Naive thymus-derived CD4-positive, alpha-beta T cell (primary cell): ENCODE measurements at regions of chr6 and their contacts with region 1.

Region 1: GRCh38 chr6:28981833-28982475 is 23.2 kb downstream of the ZNF311 start:
- DNase-seq: peak; percentile 48 to 89 (median 86)
- ATAC-seq: peak; percentile 81
- H3K4me3 ChIP-seq: peak overlapping the region; percentile 99
- H3K4me3 Mint-ChIP-seq: peak overlapping the region; percentile 85 to 100 (median 92)
- H3K27ac ChIP-seq: peak overlapping the region; percentile 47
- H3K27ac Mint-ChIP-seq: peak overlapping the region; percentile 87 to 100 (median 99)
- H3K4me1 ChIP-seq: peaks cover 7 to 18% of the 10 kb centered on the region in 2 donors
- H3K4me1 Mint-ChIP-seq: peaks cover 30 to 80% (median 66%) of the 10 kb centered on the region in 7 donors
- H3K27me3 ChIP-seq: no peaks in the 10 kb centered on the region
- H3K27me3 Mint-ChIP-seq: peaks cover 14 to 61% (median 36%) of the 10 kb centered on the region in 5 donors

Region 2: GRCh38 chr6:28124102-28124970 is 857.6 kb before region 1 on chr6 and contains the start of gene ZSCAN16:
- CTCF ChIA-PET with region 1: no interaction called
- POLR2A ChIA-PET with region 1: no interaction called
- intact Hi-C with region 1: no loop called
- DNase-seq: peak; percentile 43 to 72 (median 59)
- ATAC-seq: peak; percentile 86
- H3K4me3 ChIP-seq: peak within 1 kb of the TSS; percentile 86
- H3K4me3 Mint-ChIP-seq: peak within 1 kb of the TSS; percentile 80 to 98 (median 95)
- H3K27ac ChIP-seq: peak within 1 kb of the TSS; percentile 93
- H3K27ac Mint-ChIP-seq: peak within 1 kb of the TSS; percentile 83 to 99 (median 96)
- H3K4me1 ChIP-seq: peaks cover 12 to 16% of the 10 kb centered on the region in 2 donors
- H3K4me1 Mint-ChIP-seq: peaks cover 35 to 54% (median 48%) of the 10 kb centered on the region in 7 donors
- H3K27me3 ChIP-seq: no peaks in the 10 kb centered on the region
- H3K27me3 Mint-ChIP-seq: no peaks in the 10 kb centered on the region
- total RNA-seq, gene ZSCAN16: 6.4 to 13.9 (median 7.6) TPM

Region 3: DNA sequence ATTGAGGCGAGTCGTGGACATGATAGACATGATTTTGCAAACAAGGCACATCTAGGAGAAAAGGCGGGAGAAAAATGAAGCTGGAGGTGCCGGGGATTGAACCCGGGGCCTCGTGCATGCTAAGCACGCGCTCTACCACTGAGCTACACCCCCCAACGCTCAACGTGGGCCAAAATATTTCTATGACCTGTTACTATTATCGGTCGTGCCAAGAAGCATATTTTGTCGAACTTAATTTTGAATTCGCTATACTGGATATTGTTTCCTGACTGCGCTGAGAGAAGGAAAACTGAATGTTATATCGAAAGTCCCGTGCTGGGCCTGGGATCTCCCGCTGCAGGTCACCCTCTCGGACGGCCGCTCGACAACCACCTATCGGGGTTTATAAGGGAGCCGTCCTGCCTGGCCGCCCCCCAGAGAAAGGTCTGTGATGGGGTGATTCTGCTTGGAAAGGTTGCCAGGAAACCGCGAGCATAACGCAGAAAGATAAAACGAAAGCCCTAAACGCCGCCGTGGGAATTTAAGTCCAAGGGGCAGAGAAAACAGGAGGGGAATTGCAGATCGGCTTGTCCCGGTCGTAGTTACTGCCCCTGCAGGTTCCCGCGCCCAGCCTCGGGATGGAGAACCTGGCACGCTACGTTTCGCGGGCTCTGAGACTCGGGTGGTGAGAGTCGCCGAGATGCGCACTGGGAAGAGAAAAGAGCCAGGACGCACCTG is 118.2 kb before region 1 on chr6:
- CTCF ChIA-PET with region 1: interaction called, 5 read pairs
- POLR2A ChIA-PET with region 1: interaction called, 7 read pairs
- intact Hi-C with region 1: loop called (anchors 1 to 10 kb)
- DNase-seq: peak; percentile 60 to 93 (median 89)
- ATAC-seq: peak; percentile 64
- H3K4me3 ChIP-seq: peak overlapping the region; percentile 95
- H3K4me3 Mint-ChIP-seq: peak overlapping the region; percentile 90 to 98 (median 92)
- H3K27ac ChIP-seq: peak overlapping the region; percentile 75
- H3K27ac Mint-ChIP-seq: peak overlapping the region; percentile 89 to 100 (median 95)
- H3K4me1 ChIP-seq: peaks cover 11 to 18% of the 10 kb centered on the region in 2 donors
- H3K4me1 Mint-ChIP-seq: peaks cover 15 to 69% (median 53%) of the 10 kb centered on the region in 7 donors
- H3K27me3 ChIP-seq: no peaks in the 10 kb centered on the region
- H3K27me3 Mint-ChIP-seq: peaks cover 0 to 30% (median 4%) of the 10 kb centered on the region in 5 donors

Region 4: DNA sequence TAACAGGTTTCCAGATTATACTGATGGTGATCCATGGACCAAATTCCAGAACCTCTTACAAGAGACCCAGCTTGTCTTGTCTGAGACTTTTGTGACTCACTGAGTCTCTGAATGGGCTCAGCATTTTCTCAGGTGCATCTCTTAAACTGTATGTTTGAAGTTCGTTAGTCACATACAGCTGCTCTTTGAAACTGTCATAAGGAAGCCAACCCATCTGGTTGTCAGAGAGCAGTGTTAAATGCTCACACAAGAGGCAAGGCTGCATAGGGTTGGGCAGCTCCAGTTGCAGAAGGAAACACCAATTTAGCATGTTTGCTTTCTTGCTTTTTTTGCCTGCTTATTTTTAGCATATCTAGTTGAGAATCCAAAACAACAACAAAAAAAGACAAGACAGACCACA is 105.2 kb before region 1 on chr6:
- CTCF ChIA-PET with region 1: no interaction called
- POLR2A ChIA-PET with region 1: no interaction called
- intact Hi-C with region 1: no loop called
- DNase-seq: no peak
- ATAC-seq: no peak
- H3K4me3 ChIP-seq: no peak overlapping the region
- H3K4me3 Mint-ChIP-seq: no peak overlapping the region
- H3K27ac ChIP-seq: no peak overlapping the region
- H3K27ac Mint-ChIP-seq: no peak overlapping the region
- H3K4me1 ChIP-seq: no peaks in the 10 kb centered on the region
- H3K4me1 Mint-ChIP-seq: peaks cover 5 to 22% (median 16%) of the 10 kb centered on the region in 7 donors
- H3K27me3 ChIP-seq: no peaks in the 10 kb centered on the region
- H3K27me3 Mint-ChIP-seq: peaks cover 0 to 41% (median 3%) of the 10 kb centered on the region in 5 donors

Region 5: DNA sequence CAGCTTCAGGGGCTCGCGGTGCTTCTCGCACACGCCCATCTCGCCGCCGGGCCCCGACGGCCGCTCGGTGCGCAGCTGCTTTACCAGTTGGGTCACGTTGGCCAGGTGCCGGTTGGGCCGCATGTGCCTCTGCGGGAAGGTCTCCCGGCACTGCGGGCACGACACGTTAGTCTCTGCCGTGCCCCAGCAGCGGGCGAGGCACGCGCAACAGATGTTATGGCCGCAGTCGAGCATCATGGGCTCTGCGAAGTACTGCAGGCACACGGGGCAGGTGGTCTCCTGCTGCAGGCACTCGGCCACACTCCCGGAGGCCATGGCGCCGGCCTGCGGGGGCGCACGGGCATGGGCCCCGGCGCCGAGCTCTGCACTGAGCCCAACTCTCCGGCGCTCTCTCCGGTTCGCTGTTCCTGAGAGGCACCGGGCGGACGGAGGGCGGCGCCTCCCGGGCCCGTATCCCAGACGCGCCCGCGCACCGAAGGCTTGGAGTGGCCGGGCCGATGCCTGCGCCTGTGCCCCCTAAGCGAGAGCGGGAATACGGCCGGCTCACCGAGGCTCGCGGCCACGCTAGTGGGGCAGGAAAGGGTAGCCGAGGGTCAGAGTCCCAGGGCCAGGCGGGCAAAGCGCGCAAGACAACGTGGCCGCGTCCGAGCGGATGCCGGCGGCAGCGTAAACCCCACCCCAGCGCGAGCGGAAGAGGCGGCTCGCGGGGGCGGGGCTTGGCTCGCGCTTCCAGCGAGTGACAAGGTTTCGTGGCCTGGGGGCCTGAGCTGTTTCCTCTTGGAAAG is 58.4 kb before region 1 on chr6 and contains the start of gene TRIM27:
- CTCF ChIA-PET with region 1: no interaction called
- POLR2A ChIA-PET with region 1: interaction called, 4 read pairs
- intact Hi-C with region 1: loop called (anchors 1 kb)
- DNase-seq: peak; percentile 67 to 87 (median 80)
- ATAC-seq: peak; percentile 89
- H3K4me3 ChIP-seq: peak within 1 kb of the TSS; percentile 87
- H3K4me3 Mint-ChIP-seq: peak within 1 kb of the TSS; percentile 87 to 99 (median 95)
- H3K27ac ChIP-seq: peak within 1 kb of the TSS; percentile 86
- H3K27ac Mint-ChIP-seq: peak within 1 kb of the TSS; percentile 86 to 96 (median 92)
- H3K4me1 ChIP-seq: peaks cover 20 to 34% of the 10 kb centered on the region in 2 donors
- H3K4me1 Mint-ChIP-seq: peaks cover 28 to 52% (median 41%) of the 10 kb centered on the region in 7 donors
- H3K27me3 ChIP-seq: no peaks in the 10 kb centered on the region
- H3K27me3 Mint-ChIP-seq: no peaks in the 10 kb centered on the region
- total RNA-seq, gene TRIM27: 22.9 to 93.9 (median 67.5) TPM

Region 6: GRCh38 chr6:29005183-29005885 is 23.4 kb after region 1 on chr6 and contains the start of gene ZNF311:
- CTCF ChIA-PET with region 1: interaction called, 3 read pairs
- POLR2A ChIA-PET with region 1: no interaction called
- intact Hi-C with region 1: loop called in 1 of 2 experiments (anchors 1 kb)
- DNase-seq: peak in 6 of 9 donors; percentile 18 to 56 (median 38)
- ATAC-seq: peak; percentile 85
- H3K4me3 ChIP-seq: peak within 1 kb of the TSS; percentile 51
- H3K4me3 Mint-ChIP-seq: peak within 1 kb of the TSS; percentile 87 to 100 (median 95)
- H3K27ac ChIP-seq: peak within 1 kb of the TSS; percentile 66
- H3K27ac Mint-ChIP-seq: peak within 1 kb of the TSS; percentile 60 to 94 (median 86)
- H3K4me1 ChIP-seq: peaks cover 4 to 7% of the 10 kb centered on the region in 2 donors
- H3K4me1 Mint-ChIP-seq: peaks cover 16 to 27% (median 21%) of the 10 kb centered on the region in 7 donors
- H3K27me3 ChIP-seq: peaks cover 0 to 7% of the 10 kb centered on the region in 2 donors
- H3K27me3 Mint-ChIP-seq: peaks cover 0 to 17% (median 3%) of the 10 kb centered on the region in 5 donors
- total RNA-seq, gene ZNF311: 0.22 to 0.73 (median 0.57) TPM

Region 7: GRCh38 chr6:29035951-29036350 is 54.0 kb after region 1 on chr6:
- CTCF ChIA-PET with region 1: no interaction called
- POLR2A ChIA-PET with region 1: no interaction called
- intact Hi-C with region 1: no loop called
- DNase-seq: no peak
- ATAC-seq: no peak
- H3K4me3 ChIP-seq: no peak overlapping the region
- H3K4me3 Mint-ChIP-seq: no peak overlapping the region
- H3K27ac ChIP-seq: no peak overlapping the region
- H3K27ac Mint-ChIP-seq: no peak overlapping the region
- H3K4me1 ChIP-seq: no peaks in the 10 kb centered on the region
- H3K4me1 Mint-ChIP-seq: no peaks in the 10 kb centered on the region
- H3K27me3 ChIP-seq: no peaks in the 10 kb centered on the region
- H3K27me3 Mint-ChIP-seq: peaks cover 22 to 43% (median 30%) of the 10 kb centered on the region in 5 donors